Right lobe of liver (tissue), 6 donors: ENCODE measurements at regions of chr4 and their contacts with region 1.

Region 1: DNA sequence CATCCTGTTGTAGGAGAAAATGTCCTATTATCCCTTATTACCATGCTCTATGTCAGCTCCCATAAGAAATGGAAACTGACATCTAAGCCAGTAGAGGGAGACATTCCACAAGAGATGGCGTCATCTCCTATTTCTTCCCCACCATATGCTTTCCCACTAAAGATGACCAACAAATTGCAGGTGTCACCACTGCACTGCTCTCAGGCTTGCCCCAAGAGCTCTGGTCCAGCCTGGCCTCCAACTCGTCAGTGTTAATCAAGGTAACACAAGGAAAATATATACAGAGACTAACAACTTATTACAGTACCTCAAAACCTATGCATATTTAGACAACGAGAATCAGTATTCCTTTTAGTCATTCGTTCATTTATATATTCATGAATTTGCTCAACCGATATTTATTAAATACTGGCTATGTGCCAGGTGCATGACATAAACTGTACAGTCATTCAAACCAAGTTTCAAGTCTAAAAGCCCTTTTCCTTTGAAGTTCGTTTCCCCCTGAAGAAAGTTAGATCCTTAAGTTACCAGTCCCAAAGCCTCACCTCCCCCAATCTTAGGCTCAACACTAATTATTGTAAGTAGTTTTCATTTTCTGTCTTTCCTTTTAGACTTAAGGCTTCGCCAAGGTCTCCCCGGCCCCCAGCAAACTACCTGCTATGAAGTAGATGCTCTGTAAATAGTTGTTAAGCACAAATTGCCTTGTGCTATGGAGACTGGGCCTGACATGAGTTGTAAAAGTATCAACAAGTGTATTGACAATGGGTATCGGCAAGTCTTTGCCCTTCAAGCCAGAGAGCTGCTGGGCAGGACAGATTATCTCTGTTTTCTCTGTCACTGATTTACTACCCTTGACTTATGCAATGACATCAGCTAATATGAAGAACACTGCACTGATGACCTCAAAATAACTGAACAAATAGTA is 3.1 kb upstream of the FGB start:
- DNase-seq: peak in 1 of 3 donors; percentile 78
- ATAC-seq: peak; percentile 60 to 85 (median 72)
- H3K4me3 ChIP-seq: peak overlapping the region in 2 of 3 donors; percentile 17 to 22
- H3K27ac ChIP-seq: peak overlapping the region; percentile 45 to 91 (median 86)
- H3K4me1 ChIP-seq: peaks cover 0 to 7% (median 1%) of the 10 kb centered on the region in 4 donors
- H3K27me3 ChIP-seq: no peaks in the 10 kb centered on the region
- CTCF ChIP-seq: peak; percentile 46 to 71 (median 65)
- POLR2A ChIP-seq: no peak

Region 2: DNA sequence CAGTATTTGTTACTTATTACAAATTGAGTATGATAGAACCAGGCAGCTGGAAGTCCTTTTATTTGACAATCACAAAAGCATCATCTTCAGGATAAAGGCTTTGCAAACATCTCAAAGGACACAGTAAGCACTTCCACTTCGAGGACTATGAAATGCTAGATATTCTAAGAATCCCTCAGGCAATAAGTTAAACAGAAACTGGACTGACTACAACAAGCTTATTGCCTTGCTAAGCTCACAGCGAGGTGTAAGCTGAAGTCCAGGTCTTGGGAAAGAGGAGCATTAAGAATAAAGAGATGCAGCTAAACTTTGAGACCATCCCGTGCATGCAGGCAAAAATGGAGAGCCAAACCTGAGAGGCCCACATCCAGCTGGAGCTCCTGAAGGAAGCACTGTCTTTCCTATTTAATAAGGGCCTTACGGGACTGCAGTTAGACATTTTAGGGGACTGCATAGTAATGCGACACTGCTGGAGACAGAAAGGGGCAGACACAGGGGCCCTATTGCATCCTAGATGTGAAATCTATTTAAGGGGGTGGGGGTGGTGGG is 106.9 kb before region 1 on chr4:
- intact Hi-C with region 1: no loop called
- DNase-seq: no peak
- ATAC-seq: no peak
- H3K4me3 ChIP-seq: no peak overlapping the region
- H3K27ac ChIP-seq: no peak overlapping the region
- H3K4me1 ChIP-seq: no peaks in the 10 kb centered on the region
- H3K27me3 ChIP-seq: no peaks in the 10 kb centered on the region
- CTCF ChIP-seq: no peak
- POLR2A ChIP-seq: no peak

Region 3: GRCh38 chr4:154618708-154619315 is 59.1 kb after region 1 on chr4:
- intact Hi-C with region 1: loop called (anchors 5 kb)
- DNase-seq: peak; percentile 66 to 80 (median 73)
- ATAC-seq: peak; percentile 40 to 80 (median 64)
- H3K4me3 ChIP-seq: peak overlapping the region in 2 of 3 donors; percentile 10 to 11
- H3K27ac ChIP-seq: peak overlapping the region; percentile 55 to 94 (median 75)
- H3K4me1 ChIP-seq: peaks cover 0 to 56% (median 19%) of the 10 kb centered on the region in 4 donors
- H3K27me3 ChIP-seq: no peaks in the 10 kb centered on the region
- CTCF ChIP-seq: peak; percentile 70 to 83 (median 76)
- POLR2A ChIP-seq: no peak

Region 4: GRCh38 chr4:155509555-155509954 is 949.8 kb after region 1 on chr4:
- intact Hi-C with region 1: no loop called
- DNase-seq: no peak
- ATAC-seq: no peak
- H3K4me3 ChIP-seq: no peak overlapping the region
- H3K27ac ChIP-seq: no peak overlapping the region
- H3K4me1 ChIP-seq: no peaks in the 10 kb centered on the region
- H3K27me3 ChIP-seq: no peaks in the 10 kb centered on the region
- CTCF ChIP-seq: no peak
- POLR2A ChIP-seq: no peak